Psoas muscle (tissue), 8 donors: ENCODE measurements at regions of chr20 and their contacts with region 1.

Region 1: DNA sequence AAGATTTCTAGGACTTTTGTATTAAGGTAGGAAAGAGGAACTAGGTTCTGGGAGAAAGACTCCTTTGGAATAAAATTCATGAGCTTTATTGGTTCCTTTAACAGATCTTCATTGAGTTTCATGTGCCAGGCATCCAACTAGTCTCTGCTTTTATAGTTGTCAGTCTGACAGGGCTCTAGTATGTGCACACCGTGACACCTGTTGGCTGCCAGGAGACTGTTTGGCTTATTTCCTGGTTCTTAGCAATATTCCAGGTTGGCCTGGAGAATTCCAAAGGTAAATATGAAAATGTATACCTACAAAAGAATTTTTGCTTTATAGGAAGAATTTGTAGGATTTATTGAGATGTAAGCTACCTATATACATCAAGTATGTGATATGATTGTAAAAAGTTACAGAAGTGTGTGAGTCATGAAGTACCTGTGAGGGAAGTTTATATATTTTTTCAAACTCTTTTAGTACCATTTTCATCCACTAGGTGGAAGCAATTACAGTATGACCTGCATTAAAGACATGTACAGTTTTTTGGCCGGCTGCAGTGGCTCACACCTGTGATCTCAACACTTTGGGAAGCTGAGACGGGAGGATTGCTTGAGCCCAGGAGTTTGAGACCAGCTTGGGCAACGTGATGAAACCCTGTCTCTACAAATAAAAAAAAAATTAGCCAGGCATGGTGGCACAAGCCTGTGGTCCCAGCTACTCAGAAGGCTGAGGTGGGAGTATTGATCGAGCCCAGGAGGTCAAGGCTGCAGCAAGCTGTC is 35.2 kb downstream of the NDUFAF5 start:
- DNase-seq: peak; percentile 28 to 63
- ATAC-seq: peak; percentile 75 to 83 (median 78)
- H3K4me3 ChIP-seq: no peak overlapping the region
- H3K27ac ChIP-seq: peak overlapping the region; percentile 52
- H3K4me1 ChIP-seq: peaks cover 9% of the 10 kb centered on the region
- H3K27me3 ChIP-seq: no peaks in the 10 kb centered on the region
- CTCF ChIP-seq: peak; percentile 76

Region 2: GRCh38 chr20:13436530-13436929 is 383.5 kb before region 1 on chr20:
- intact Hi-C with region 1: no loop called
- DNase-seq: no peak
- ATAC-seq: no peak
- H3K4me3 ChIP-seq: no peak overlapping the region
- H3K27ac ChIP-seq: no peak overlapping the region
- H3K4me1 ChIP-seq: no peaks in the 10 kb centered on the region
- H3K27me3 ChIP-seq: no peaks in the 10 kb centered on the region
- CTCF ChIP-seq: no peak

Region 3: DNA sequence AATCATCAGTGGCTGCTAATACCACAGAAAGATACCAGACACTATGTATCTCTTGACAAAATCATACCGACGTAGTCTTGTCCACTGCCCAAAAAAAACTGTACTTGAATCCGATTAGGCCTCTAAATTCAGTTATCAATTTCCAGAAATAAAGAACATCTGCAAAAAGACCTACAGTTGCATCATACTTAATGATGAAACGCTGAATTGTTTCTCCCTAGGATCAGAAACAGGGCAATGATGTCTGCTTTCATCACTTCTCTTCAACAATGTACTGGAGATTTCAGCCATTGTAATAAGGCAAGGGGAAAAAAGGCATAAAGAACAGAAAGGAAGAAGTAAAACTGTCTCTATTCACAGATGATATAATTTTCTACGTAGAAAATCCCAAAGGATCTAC is 333.4 kb before region 1 on chr20:
- intact Hi-C with region 1: no loop called
- DNase-seq: no peak
- ATAC-seq: no peak
- H3K4me3 ChIP-seq: no peak overlapping the region
- H3K27ac ChIP-seq: no peak overlapping the region
- H3K4me1 ChIP-seq: peaks cover 8% of the 10 kb centered on the region
- H3K27me3 ChIP-seq: no peaks in the 10 kb centered on the region
- CTCF ChIP-seq: no peak

Region 4: GRCh38 chr20:13771853-13772453 is 48.1 kb before region 1 on chr20:
- intact Hi-C with region 1: no loop called
- DNase-seq: no peak
- ATAC-seq: peak in 1 of 4 donors; percentile 65
- H3K4me3 ChIP-seq: no peak overlapping the region
- H3K27ac ChIP-seq: no peak overlapping the region
- H3K4me1 ChIP-seq: peaks cover 4% of the 10 kb centered on the region
- H3K27me3 ChIP-seq: no peaks in the 10 kb centered on the region
- CTCF ChIP-seq: peak; percentile 59

Region 5: GRCh38 chr20:13857304-13857703 is 37.2 kb after region 1 on chr20:
- intact Hi-C with region 1: loop called in 1 of 2 experiments (anchors 5 kb)
- DNase-seq: peak; percentile 79 to 90
- ATAC-seq: peak; percentile 95 to 98 (median 96)
- H3K4me3 ChIP-seq: no peak overlapping the region
- H3K27ac ChIP-seq: peak overlapping the region; percentile 46
- H3K4me1 ChIP-seq: peaks cover 17% of the 10 kb centered on the region
- H3K27me3 ChIP-seq: no peaks in the 10 kb centered on the region
- CTCF ChIP-seq: no peak

Region 6: DNA sequence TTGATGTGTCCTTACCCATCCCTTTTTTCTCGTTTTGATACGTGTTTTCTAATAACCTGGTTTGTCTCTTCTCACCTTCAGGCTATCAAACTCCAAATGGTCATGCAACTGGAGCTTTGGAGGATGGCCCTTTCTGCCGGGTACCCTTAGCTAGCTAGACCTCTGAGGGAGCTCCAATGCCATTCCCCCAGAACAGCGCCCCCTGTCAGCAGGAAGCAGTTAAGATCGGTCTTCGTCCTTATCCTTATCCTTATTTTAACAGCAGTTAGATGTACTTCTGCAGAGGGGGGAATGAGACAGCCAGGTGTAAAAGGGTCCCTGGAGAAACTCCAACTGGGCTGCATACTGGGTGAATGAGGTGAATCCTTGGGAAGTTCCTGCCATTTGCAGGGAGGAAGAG is 133.2 kb after region 1 on chr20:
- intact Hi-C with region 1: loop called in 1 of 2 experiments (anchors 5 kb)
- DNase-seq: no peak
- ATAC-seq: no peak
- H3K4me3 ChIP-seq: no peak overlapping the region
- H3K27ac ChIP-seq: no peak overlapping the region
- H3K4me1 ChIP-seq: no peaks in the 10 kb centered on the region
- H3K27me3 ChIP-seq: peaks cover 0 to 4% (median 0%) of the 10 kb centered on the region in 3 donors
- CTCF ChIP-seq: no peak

Region 7: DNA sequence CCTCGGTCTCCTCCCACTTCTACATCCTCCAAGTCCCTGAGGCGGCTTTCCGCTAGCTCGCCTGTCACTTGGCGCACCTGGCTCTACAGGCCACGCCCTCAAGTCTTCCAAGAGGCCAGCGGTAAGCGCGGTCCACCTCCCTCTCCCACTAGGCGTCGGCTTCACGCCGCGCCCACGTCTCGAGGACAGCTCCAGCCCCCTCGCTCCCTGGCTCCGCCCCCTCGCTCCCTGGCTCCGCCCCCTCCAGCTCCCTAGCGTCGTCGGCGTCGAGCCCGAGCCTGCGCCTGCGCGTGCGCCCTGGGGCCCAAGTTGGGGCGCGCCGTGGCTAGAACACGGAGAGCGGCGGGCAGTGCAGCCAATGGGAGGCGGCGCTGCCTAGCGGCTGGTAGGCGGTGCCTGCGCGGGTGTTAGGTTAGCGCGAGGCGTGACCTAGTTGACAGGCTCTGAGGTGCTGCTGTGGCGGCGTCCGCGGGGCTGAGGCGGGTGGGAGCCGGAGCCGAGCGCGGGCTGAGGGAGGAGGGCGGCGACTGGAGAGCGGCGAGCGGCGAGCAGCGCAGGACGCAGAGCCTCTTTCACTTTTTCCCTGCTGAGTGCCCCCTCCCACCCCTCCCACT is 175.1 kb after region 1 on chr20 and contains the start of gene MACROD2:
- intact Hi-C with region 1: loop called in 1 of 2 experiments (anchors 5 kb)
- DNase-seq: peak; percentile 90 to 95
- ATAC-seq: peak; percentile 98 to 99 (median 98)
- H3K4me3 ChIP-seq: peak within 1 kb of the TSS; percentile 84
- H3K27ac ChIP-seq: peak within 1 kb of the TSS; percentile 75
- H3K4me1 ChIP-seq: no peaks in the 10 kb centered on the region
- H3K27me3 ChIP-seq: no peaks in the 10 kb centered on the region
- CTCF ChIP-seq: no peak
- total RNA-seq, gene MACROD2: 0.67 to 4.8 (median 2.5) TPM

Region 8: GRCh38 chr20:14055127-14055742 is 235.2 kb after region 1 on chr20:
- intact Hi-C with region 1: loop called (anchors 1 to 2 kb)
- DNase-seq: no peak
- ATAC-seq: peak in 2 of 4 donors; percentile 44 to 84
- H3K4me3 ChIP-seq: no peak overlapping the region
- H3K27ac ChIP-seq: no peak overlapping the region
- H3K4me1 ChIP-seq: no peaks in the 10 kb centered on the region
- H3K27me3 ChIP-seq: no peaks in the 10 kb centered on the region
- CTCF ChIP-seq: peak; percentile 67